Ovary (tissue), 10 donors: ENCODE measurements at regions of chr7 and their contacts with region 1.

Region 1: GRCh38 chr7:23546897-23547572 is 15.3 kb upstream of the TRA2A start:
- DNase-seq: peak; percentile 64 to 83 (median 79)
- H3K4me3 ChIP-seq: no peak overlapping the region
- H3K27ac ChIP-seq: no peak overlapping the region
- H3K4me1 ChIP-seq: no peaks in the 10 kb centered on the region
- H3K27me3 ChIP-seq: no peaks in the 10 kb centered on the region
- CTCF ChIP-seq: peak; percentile 85 to 92 (median 91)
- EP300 ChIP-seq: no peak
- POLR2A ChIP-seq: no peak

Region 2: GRCh38 chr7:23161482-23161881 is 385.6 kb before region 1 on chr7:
- intact Hi-C with region 1: no loop called
- DNase-seq: no peak
- H3K4me3 ChIP-seq: no peak overlapping the region
- H3K27ac ChIP-seq: no peak overlapping the region
- H3K4me1 ChIP-seq: no peaks in the 10 kb centered on the region
- H3K27me3 ChIP-seq: no peaks in the 10 kb centered on the region
- CTCF ChIP-seq: no peak
- EP300 ChIP-seq: no peak
- POLR2A ChIP-seq: no peak

Region 3: GRCh38 chr7:23261843-23262452 is 285.1 kb before region 1 on chr7:
- intact Hi-C with region 1: loop called in 1 of 4 experiments (anchors 10 kb)
- DNase-seq: peak; percentile 33 to 63 (median 51)
- H3K4me3 ChIP-seq: no peak overlapping the region
- H3K27ac ChIP-seq: no peak overlapping the region
- H3K4me1 ChIP-seq: no peaks in the 10 kb centered on the region
- H3K27me3 ChIP-seq: no peaks in the 10 kb centered on the region
- CTCF ChIP-seq: peak in 2 of 3 donors; percentile 31 to 34
- EP300 ChIP-seq: no peak
- POLR2A ChIP-seq: no peak

Region 4: DNA sequence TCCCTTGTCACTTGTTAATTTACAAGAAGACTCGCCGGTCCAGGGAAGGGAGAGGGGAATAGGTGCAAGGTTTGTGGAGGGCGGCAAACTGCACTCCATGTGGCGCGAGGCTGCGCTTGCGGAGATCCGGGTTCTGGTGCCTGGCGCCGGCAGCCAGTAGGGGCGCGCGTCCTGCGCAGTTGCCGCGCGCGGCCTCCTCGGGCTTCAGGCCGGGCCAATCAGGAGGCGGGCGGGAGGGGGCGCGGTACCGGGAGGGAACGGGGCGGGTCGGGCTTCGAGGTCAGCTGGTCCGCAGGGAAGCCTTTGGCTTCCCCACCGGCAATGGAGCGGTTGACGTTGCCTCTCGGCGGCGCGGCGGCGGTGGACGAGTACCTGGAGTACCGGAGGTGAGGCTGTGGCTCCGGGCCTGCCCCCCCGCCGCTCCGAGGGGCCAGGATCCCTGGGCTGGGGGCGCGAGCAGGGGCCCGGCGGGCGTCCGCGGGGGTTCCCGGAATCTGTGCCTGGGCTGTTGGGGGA is 132.9 kb after region 1 on chr7 and contains the start of gene FAM221A:
- intact Hi-C with region 1: no loop called
- DNase-seq: peak; percentile 83 to 91 (median 88)
- H3K4me3 ChIP-seq: peak within 1 kb of the TSS; percentile 66
- H3K27ac ChIP-seq: peak within 1 kb of the TSS; percentile 63 to 76
- H3K4me1 ChIP-seq: peaks cover 3% of the 10 kb centered on the region
- H3K27me3 ChIP-seq: no peaks in the 10 kb centered on the region
- CTCF ChIP-seq: peak; percentile 59 to 81 (median 69)
- EP300 ChIP-seq: no peak
- POLR2A ChIP-seq: peak; percentile 45
- total RNA-seq, gene FAM221A: 3.4 to 17.2 (median 5.2) TPM